Calu3 (cell line): ENCODE measurements at regions of chr7 and their contacts with region 1.

Region 1: DNA sequence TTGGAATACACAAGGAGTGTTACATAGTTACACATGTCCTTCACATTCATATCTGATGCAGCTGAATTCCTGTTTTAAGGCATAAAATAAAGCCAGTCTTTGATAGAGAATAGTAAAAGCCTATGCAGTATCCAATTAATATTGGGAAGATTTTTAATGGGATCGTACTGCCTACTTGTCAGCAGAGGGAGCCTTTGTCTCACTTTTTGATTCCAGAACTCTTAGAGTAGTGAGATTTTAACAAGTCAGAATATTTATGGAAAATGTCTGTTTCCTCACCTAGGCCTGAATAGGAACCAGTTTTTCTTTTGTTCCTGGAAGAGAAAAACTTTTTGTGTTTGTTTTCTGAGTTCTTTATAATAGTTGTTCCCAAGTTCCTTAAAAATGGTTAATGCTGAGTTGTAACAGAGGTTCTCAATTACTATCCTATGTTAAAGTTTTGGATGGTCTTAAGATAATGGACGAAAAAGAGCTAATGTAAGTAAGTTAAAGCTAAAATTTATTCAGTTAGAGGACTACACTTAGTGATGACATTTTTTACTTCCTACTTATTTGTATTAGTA is 114.0 kb downstream of the BBS9 start:
- DNase-seq: peak; percentile 15
- H3K4me3 Mint-ChIP-seq: no peak overlapping the region
- H3K27ac Mint-ChIP-seq: no peak overlapping the region
- H3K4me1 Mint-ChIP-seq: no peaks in the 10 kb centered on the region
- H3K27me3 Mint-ChIP-seq: no peaks in the 10 kb centered on the region
- CTCF ChIP-seq: peak; percentile 79

Region 2: DNA sequence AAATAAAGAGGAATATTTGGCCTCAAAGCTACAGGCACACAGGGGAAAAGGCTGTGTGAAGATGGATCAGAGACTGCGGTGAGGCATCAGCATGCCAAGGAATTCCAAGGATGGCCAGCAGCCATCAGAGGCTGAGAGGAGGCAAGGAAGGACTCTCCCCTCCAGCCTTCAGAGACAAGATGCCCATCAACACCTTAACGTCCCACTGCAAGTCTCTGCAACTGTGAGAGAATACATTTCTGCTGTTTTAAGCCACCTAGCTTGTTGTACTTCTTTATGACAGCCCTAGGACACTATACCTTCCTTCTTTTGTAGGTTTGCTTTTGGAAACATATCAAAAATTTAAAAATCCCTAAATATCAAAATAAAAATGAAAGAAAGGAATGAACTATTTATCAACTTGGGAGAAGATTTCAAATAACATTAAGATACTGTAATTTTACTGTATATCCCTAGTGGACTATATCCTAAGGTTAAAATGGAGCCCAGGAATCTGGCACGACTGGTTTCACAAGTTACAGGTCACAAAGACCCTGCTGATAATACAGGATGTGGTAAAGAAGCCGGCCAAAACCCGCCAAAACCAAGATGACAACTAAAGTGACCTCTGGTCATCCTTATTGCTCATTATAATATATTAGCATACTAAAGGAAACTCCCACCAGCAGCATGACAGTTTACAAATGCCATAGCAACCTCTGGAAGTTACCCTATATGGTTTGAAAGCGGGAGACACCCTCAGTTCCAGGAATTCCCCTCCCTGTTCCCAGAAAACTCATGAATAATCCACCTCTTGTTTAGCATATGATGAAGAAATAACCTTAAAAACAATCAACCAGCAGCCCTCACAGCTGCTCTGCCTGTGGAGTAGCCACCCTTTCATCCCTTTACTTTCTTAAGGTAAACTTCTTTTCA is 562.9 kb before region 1 on chr7:
- CTCF ChIA-PET with region 1: no interaction called
- intact Hi-C with region 1: no loop called
- DNase-seq: peak; percentile 95
- H3K4me3 Mint-ChIP-seq: peak overlapping the region; percentile 26
- H3K27ac Mint-ChIP-seq: peak overlapping the region; percentile 96
- H3K4me1 Mint-ChIP-seq: peaks cover 53% of the 10 kb centered on the region
- H3K27me3 Mint-ChIP-seq: no peaks in the 10 kb centered on the region
- CTCF ChIP-seq: no peak

Region 3: DNA sequence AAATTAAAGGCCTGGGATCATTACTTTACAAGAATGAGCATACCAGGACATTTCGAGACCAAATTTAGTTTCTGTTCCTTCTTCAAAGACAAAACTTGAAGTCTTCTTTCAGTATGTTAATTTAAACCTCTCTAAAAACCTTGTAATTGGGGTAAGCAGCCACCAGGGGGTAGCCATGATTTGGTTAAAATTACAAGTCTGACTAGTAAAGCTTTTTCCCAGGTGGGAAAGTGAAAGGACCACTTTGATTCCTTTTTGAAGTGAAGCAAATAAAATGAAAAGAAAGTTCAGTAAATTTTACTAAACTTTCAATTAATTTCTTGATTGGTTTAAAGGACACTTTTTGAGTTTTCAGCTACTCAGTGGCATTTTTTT is 180.2 kb after region 1 on chr7:
- CTCF ChIA-PET with region 1: no interaction called
- intact Hi-C with region 1: loop called (anchors 10 kb)
- DNase-seq: peak; percentile 55
- H3K4me3 Mint-ChIP-seq: no peak overlapping the region
- H3K27ac Mint-ChIP-seq: no peak overlapping the region
- H3K4me1 Mint-ChIP-seq: no peaks in the 10 kb centered on the region
- H3K27me3 Mint-ChIP-seq: peaks cover under 1% of the 10 kb centered on the region
- CTCF ChIP-seq: peak; percentile 71

Region 4: GRCh38 chr7:33744293-33745075 is 501.1 kb after region 1 on chr7:
- CTCF ChIA-PET with region 1: no interaction called
- intact Hi-C with region 1: loop called (anchors 2 kb)
- DNase-seq: no peak
- H3K4me3 Mint-ChIP-seq: no peak overlapping the region
- H3K27ac Mint-ChIP-seq: no peak overlapping the region
- H3K4me1 Mint-ChIP-seq: no peaks in the 10 kb centered on the region
- H3K27me3 Mint-ChIP-seq: peaks cover 29% of the 10 kb centered on the region
- CTCF ChIP-seq: peak; percentile 19

Region 5: DNA sequence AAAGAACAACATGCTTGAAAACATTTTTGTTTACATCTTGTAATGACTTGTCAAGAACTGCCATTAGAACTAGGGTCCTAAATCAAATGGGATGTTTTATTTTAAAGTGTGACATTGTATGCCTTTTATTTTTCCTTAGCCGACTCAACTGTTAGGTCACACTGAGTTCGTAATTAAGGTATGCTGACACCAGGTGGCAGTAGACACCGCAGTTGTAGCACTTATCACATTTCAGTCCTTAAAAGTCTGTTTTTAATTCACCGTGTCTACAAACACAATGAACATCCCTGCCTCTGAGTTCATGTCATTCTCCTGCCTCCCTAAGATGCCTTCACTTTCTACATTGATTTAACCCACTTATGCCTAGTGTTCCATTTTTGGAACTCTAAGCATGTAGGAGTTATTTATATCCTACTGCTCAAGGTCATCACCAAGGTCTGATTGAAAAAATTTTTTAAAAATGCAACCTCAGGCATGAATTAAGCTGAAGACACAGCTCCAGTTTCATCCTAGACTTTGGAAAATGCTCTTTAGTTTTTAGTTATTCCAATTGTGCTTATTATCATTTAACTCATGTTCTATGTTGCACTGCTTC is 848.0 kb after region 1 on chr7:
- CTCF ChIA-PET with region 1: no interaction called
- intact Hi-C with region 1: loop called (anchors 10 kb)
- DNase-seq: peak; percentile 66
- H3K4me3 Mint-ChIP-seq: no peak overlapping the region
- H3K27ac Mint-ChIP-seq: no peak overlapping the region
- H3K4me1 Mint-ChIP-seq: no peaks in the 10 kb centered on the region
- H3K27me3 Mint-ChIP-seq: peaks cover 18% of the 10 kb centered on the region
- CTCF ChIP-seq: peak; percentile 61